ENCODE measurements at regions of chr16 and their contacts with region 1.

Region 1: DNA sequence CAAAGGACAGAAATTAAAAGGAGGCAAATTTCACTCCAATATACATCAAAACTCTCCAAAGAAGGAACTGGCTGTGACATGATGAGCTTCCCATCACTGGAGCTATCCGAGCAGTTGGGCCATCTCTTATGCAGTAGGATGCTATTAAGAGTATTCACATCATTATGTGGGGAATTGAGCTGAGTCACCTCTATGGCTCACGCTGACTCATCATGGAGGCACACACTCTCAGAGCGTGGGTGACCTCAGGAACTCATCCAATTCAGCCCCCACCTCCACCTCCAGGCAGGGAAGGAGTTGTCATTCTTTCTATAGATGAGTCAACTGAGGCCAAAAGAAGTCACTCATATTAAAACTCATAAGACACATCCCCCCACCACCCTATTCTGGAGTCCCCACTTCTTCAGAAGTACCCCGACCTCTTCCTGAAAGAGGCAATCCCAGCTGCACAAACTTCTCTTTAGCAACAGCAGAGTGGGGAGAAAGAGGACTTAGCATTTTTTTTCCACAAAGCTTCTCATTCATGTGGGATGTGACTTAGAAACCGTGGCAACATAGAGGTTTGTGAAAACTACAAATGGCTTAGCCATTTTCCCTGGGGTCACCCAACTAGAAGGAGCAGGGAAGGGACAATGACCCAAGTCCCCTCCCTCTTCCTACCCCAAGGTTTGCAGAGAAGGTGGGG is 32.5 kb downstream of the ABCC12 start:
- DNase-seq: peak; percentile 13
- H3K4me3 Mint-ChIP-seq: no peak overlapping the region
- H3K27ac Mint-ChIP-seq: peak overlapping the region; percentile 36
- H3K4me1 Mint-ChIP-seq: peaks cover 40% of the 10 kb centered on the region
- H3K27me3 Mint-ChIP-seq: no peaks in the 10 kb centered on the region

Region 2: GRCh38 chr16:48100696-48101674 is 22.3 kb before region 1 on chr16:
- intact Hi-C with region 1: loop called (anchors 1 kb)
- DNase-seq: no peak
- H3K4me3 Mint-ChIP-seq: no peak overlapping the region
- H3K27ac Mint-ChIP-seq: no peak overlapping the region
- H3K4me1 Mint-ChIP-seq: peaks cover 12% of the 10 kb centered on the region
- H3K27me3 Mint-ChIP-seq: peaks cover 1% of the 10 kb centered on the region

Region 3: GRCh38 chr16:48136547-48137360 is 13.5 kb after region 1 on chr16:
- intact Hi-C with region 1: no loop called
- DNase-seq: no peak
- H3K4me3 Mint-ChIP-seq: no peak overlapping the region
- H3K27ac Mint-ChIP-seq: no peak overlapping the region
- H3K4me1 Mint-ChIP-seq: no peaks in the 10 kb centered on the region
- H3K27me3 Mint-ChIP-seq: peaks cover 5% of the 10 kb centered on the region

Region 4: DNA sequence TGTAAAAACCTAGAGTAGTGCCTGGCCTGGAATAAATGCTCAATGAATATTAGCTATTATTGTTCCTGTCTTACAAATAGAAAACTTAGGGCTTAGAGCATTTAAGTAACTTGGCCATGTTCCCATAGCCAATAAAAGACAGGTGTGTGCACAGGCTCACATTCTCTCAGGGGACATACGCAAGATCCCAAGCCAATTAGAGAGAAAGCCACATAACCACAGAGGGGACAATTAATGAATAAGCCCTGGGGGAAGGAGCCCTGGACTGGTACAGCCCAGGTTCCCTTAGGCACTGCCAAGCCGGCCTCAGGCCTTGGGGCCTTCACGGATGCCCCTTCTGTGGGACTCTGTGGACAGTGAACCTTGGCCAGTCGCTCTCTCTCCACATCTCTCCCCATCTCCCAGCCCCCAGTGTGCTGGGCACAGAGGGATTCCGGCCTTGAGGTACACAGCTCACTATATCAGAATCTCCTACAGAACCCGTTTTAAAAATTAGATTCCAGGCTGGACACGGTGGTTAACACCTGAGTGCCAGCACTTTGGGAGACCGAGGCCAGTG is 59.8 kb after region 1 on chr16:
- intact Hi-C with region 1: no loop called
- DNase-seq: no peak
- H3K4me3 Mint-ChIP-seq: no peak overlapping the region
- H3K27ac Mint-ChIP-seq: no peak overlapping the region
- H3K4me1 Mint-ChIP-seq: peaks cover 2% of the 10 kb centered on the region
- H3K27me3 Mint-ChIP-seq: peaks cover 3% of the 10 kb centered on the region

Measured in activated T-helper 1 cell treated with anti-CD3 and anti-CD28 coated beads, Interleukin-12 subunit alpha, Interleukin-12 subunit beta, Interleukin-2, Interleukin-4 antibody, amounts not matched to agents 30 ng/mL and 10 ng/mL and 1 ng/mL, durations not matched to agents 14 hours and 24 hours and 36 hours (primary cell).